Tibial artery (tissue), 4 donors: ENCODE measurements at regions of chr11 and their contacts with region 1.

Region 1: DNA sequence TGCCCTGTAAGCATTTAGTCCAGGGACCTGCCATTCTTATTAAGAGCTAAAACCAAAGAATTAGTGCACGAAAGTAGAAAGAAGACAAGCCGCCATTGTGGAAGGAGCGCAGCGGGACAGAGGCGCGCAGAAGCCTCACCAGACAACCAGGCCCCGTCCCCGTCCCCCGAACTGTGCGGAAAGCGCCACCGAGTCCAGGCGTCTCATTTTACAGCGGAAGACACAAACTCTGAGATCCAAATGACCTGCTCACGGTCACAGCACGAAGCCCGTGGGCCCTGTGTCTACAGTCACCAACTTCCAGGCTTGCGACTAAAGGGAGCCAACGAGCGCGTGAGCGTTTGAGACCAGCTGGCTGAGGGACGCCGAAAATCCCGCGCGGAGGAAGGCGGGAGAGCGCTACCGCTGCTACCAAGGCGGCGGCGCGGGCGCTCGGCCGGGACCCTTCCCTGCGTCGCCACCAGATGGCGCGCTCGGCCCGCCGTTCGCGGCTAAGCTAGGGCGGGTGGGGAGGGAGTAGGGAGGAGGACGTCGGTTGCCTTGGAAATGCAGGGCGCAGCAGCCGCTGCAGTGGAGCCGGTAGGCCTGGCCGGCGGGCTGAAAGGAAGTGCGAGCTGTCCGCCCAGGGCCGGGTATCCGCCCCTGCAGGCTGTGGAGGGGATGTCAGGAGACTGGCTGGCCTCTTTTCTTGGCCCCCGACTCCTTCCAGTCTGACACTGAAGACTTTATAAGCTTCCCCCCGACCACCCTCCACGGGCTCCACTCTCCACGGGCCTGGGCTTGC is 434 bp upstream of the CCDC83 start:
- DNase-seq: peak; percentile 88 to 95
- H3K4me3 ChIP-seq: peak overlapping the region; percentile 54 to 57
- H3K27ac ChIP-seq: peak overlapping the region; percentile 74 to 76
- H3K4me1 ChIP-seq: peaks cover 0 to 16% (median 2%) of the 10 kb centered on the region in 4 donors
- H3K27me3 ChIP-seq: no peaks in the 10 kb centered on the region
- CTCF ChIP-seq: peak; percentile 93 to 99

Region 2: DNA sequence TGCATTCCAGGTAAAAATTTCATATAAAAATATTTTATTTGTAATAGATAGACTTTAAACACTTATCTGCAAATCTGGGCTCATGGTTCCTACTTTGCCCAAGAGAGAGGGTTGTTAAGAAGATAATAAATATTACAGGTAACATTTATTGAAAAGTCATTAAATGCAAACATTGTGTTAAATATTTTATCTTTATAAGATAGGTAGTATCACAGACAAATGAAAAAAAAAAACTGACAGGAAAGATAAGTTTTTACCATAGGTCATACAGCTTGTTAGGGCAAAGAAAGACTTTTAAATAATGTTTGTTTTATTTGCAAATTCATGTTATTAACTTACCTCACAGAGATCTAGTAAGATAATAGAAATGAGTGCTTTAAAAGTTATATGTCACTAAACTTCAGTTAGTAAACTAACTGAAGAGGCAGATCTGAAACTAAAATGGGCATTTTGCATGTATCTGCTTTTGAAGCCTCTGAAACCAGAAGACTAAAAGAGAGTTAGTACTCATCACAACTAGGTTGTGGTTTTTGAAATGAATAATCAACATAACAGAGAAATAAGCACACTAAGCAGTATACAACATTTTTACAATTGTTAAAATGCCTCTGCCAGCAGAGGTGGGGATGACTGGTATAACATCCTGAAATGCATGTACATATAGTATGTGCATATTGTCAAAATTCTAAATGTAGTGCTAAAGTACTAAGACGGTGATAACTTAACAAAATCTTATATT is 792.3 kb before region 1 on chr11:
- intact Hi-C with region 1: no loop called
- DNase-seq: no peak
- H3K4me3 ChIP-seq: no peak overlapping the region
- H3K27ac ChIP-seq: no peak overlapping the region
- H3K4me1 ChIP-seq: no peaks in the 10 kb centered on the region
- H3K27me3 ChIP-seq: no peaks in the 10 kb centered on the region
- CTCF ChIP-seq: no peak

Region 3: DNA sequence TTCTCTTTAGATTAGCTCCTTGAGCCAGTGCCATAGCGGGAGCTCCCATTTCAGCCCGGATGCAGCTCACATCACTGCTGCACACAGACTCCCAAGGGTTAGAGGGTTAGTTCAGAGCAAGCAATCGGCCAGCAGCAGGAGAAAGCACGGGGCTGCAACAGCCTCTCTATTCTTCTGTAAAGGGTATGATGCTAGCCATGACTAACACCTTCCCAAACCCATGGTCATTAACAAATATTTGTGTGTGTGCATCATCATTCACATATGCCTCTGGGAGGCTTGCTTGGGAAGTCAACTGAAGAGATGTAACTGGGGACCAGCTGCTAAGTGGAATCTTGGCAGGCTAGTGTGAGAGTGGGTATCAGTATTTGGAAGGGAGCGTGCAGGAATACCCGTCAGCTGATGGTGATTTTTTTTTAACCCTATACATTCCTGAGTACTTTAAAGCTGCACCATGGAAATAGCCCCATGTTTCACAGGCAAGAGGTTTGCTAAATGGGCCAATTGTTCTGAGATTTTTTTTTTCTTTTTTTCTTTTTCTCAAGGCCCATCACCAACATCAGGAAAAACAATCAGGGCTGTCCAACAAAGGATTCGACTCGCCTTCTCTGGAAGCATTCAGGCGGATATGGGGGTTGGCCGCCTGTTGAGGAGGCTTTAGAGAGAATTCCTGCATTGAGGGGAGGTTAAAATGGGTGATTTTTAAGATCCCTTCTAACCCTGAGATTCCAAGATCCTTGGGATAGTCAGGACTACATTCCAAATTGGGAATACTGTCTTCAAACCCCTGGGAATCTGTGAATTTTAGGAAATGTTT is 135.6 kb before region 1 on chr11:
- intact Hi-C with region 1: no loop called
- DNase-seq: peak; percentile 26 to 71
- H3K4me3 ChIP-seq: peak overlapping the region; percentile 39 to 46
- H3K27ac ChIP-seq: peak overlapping the region; percentile 43 to 79
- H3K4me1 ChIP-seq: peaks cover 0 to 39% (median 6%) of the 10 kb centered on the region in 4 donors
- H3K27me3 ChIP-seq: no peaks in the 10 kb centered on the region
- CTCF ChIP-seq: no peak

Region 4: DNA sequence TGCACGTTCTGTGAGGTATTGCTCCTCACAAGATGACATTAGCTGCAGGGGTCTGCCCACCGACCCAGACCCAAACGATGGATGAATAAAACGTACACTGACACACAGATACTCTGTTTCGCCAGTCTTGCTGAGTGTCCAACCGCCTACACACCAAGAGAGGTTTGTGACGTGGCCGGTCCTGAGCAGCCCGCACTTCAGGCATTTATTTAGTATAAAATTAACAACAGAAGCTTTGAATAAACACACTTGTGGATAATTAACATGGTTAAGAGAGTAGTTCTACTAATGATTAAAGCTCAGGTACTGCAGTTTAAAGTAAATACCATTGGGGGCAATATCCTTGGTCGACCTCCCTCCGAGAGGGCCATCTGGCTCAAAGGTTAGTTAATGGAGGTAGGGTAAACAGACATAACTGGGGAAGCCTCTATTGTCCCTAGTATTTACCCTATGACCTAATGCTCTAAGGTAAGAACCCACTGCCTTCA is 76.2 kb after region 1 on chr11:
- intact Hi-C with region 1: no loop called
- DNase-seq: no peak
- H3K4me3 ChIP-seq: no peak overlapping the region
- H3K27ac ChIP-seq: no peak overlapping the region
- H3K4me1 ChIP-seq: no peaks in the 10 kb centered on the region
- H3K27me3 ChIP-seq: no peaks in the 10 kb centered on the region
- CTCF ChIP-seq: no peak

Region 5: GRCh38 chr11:86218125-86219084 is 363.7 kb after region 1 on chr11:
- intact Hi-C with region 1: loop called (anchors 10 kb)
- DNase-seq: peak; percentile 54 to 81
- H3K4me3 ChIP-seq: peak overlapping the region; percentile 33 to 43
- H3K27ac ChIP-seq: peak overlapping the region; percentile 10 to 60
- H3K4me1 ChIP-seq: peaks cover 0 to 14% (median 1%) of the 10 kb centered on the region in 4 donors
- H3K27me3 ChIP-seq: no peaks in the 10 kb centered on the region
- CTCF ChIP-seq: peak; percentile 85 to 90

Region 6: GRCh38 chr11:86291466-86292262 is 436.9 kb after region 1 on chr11:
- intact Hi-C with region 1: loop called (anchors 10 kb)
- DNase-seq: no peak
- H3K4me3 ChIP-seq: no peak overlapping the region
- H3K27ac ChIP-seq: no peak overlapping the region
- H3K4me1 ChIP-seq: no peaks in the 10 kb centered on the region
- H3K27me3 ChIP-seq: no peaks in the 10 kb centered on the region
- CTCF ChIP-seq: peak; percentile 51 to 53